ENCODE measurements at regions of chr1 and their contacts with region 1.

Region 1: DNA sequence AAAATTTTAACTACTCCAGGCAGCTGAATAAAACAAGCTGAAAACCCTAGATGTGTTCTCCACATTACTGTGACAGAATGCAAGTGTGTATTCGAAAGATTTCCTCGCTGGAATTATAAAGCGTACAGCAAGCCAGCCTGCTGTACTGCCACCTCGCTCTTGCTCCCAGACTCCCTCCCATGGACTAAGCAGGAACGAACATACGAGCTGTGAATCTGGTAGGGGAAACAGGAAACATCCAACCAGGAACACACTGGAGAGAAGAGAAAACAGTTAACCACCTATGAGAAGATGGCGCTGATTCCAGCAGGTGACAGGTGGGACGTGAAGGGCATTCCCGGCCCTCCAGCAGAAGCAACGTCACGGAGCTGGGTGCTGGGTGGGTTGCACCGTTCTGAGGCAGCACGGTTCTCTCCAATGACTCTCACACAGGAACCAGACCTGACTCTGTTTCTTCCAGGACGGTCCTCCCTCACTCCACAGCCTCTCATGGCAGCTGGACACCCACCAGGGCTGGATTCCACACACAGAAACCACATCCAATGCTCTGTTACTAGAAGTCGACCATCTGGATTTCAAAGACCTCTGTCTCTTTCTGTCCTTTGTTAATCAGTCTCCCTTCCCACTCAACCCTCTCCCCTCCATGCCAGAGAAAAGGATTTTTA is 219.2 kb downstream of the RERE start:
- DNase-seq: peak; percentile 75
- H3K4me3 ChIP-seq: peak overlapping the region in 3 of 4 donors; percentile 2 to 27 (median 11)
- H3K27ac ChIP-seq: peak overlapping the region; percentile 58 to 79 (median 70)
- H3K4me1 ChIP-seq: peaks cover 0 to 51% (median 43%) of the 10 kb centered on the region in 4 donors
- H3K27me3 ChIP-seq: no peaks in the 10 kb centered on the region
- CTCF ChIP-seq: peak; percentile 43 to 66 (median 46)
- EP300 ChIP-seq: no peak
- POLR2A ChIP-seq: no peak

Region 2: DNA sequence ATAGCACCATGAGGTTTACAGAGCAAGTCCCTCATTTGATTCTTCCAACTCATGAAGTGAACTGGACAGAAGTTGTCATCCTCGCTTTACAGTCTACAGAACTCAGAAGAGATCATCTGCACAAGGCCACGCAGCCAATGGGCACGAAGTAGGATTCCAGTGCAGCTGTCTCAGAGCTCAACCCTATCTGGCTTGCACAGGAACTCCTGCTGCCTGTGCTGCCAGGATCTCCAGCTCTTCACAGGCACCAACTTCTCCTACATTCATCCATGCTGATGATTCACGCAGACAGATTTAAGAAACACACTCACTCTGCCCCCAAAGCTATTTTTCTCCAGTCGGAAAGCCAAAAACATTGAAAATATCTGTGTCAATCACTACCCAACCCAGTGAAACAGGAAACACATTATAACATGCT is 62.2 kb after region 1 on chr1:
- intact Hi-C with region 1: loop called (anchors 5 kb)
- DNase-seq: peak; percentile 82
- H3K4me3 ChIP-seq: no peak overlapping the region
- H3K27ac ChIP-seq: peak overlapping the region; percentile 55 to 70 (median 61)
- H3K4me1 ChIP-seq: peaks cover 0 to 65% (median 61%) of the 10 kb centered on the region in 4 donors
- H3K27me3 ChIP-seq: no peaks in the 10 kb centered on the region
- CTCF ChIP-seq: no peak
- EP300 ChIP-seq: no peak
- POLR2A ChIP-seq: no peak

Region 3: DNA sequence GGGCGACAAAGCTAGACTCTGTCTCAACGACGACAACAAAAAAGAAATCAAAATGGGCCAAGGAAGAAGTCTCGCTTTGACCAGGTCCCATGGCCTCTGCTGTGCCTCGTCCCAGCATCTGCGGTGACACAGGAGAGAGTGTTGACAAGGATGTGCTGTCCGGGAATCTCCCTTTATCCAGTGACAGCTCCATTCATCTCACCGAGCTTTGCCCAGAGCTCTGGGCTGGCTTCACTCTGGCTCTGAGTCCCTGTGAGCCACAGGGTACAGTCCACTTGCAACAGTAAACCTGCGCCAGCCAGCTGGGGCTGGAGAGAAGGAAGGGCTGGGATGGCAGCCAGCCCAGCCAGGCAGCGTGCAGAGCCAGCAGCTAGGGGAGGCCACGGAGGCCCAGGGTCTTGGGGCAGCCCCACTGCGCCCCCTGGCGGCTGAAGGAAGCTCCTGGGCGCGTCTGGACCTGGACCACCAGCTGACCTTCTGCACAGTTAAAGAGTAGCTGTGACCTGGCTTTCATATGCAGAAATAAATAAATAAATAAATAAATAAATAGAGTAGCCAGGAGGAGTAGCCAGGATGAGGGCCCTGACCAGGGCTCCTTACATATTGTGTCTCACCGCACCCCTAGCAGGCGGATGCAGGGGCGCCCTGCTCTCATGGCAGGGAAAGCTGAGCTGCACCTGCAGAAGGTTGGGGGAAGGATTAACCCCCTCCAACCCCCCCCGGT is 250.6 kb after region 1 on chr1:
- intact Hi-C with region 1: no loop called
- DNase-seq: peak; percentile 97
- H3K4me3 ChIP-seq: no peak overlapping the region
- H3K27ac ChIP-seq: peak overlapping the region; percentile 54 to 75 (median 71)
- H3K4me1 ChIP-seq: peaks cover 0 to 21% (median 6%) of the 10 kb centered on the region in 4 donors
- H3K27me3 ChIP-seq: no peaks in the 10 kb centered on the region
- CTCF ChIP-seq: peak; percentile 57 to 92 (median 88)
- EP300 ChIP-seq: peak in 2 of 4 donors; percentile 14 to 51
- POLR2A ChIP-seq: no peak

Measured in sigmoid colon (tissue), 7 donors.